Naive thymus-derived CD4-positive, alpha-beta T cell (primary cell): ENCODE measurements at regions of chr12 and their contacts with region 1.

Region 1: DNA sequence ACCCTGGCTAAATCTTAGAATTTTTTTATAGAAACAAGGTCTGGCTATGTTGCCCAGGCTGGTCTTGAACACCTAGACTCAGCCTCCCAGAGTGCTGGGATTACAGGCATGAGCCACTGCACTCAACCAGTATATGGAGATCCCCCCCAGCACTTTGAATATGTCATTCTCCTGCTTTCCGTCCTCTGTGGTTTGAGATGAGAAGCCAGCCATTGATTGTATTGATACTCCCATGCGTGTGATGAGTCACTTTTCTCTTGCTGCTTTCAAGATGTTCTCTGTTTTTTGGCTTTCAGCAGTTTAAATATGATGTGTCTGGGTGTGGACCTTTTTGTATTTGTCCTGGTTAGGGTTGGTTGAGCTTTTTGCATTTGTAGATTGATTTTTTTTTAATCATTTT is 75.2 kb upstream of the DNM1L start:
- DNase-seq: peak in 1 of 9 donors; percentile 57
- ATAC-seq: no peak
- H3K4me3 ChIP-seq: no peak overlapping the region
- H3K4me3 Mint-ChIP-seq: peak overlapping the region in 1 of 10 donors; percentile 57
- H3K27ac ChIP-seq: no peak overlapping the region
- H3K27ac Mint-ChIP-seq: peak overlapping the region in 1 of 9 donors; percentile 83
- H3K4me1 ChIP-seq: no peaks in the 10 kb centered on the region
- H3K4me1 Mint-ChIP-seq: peaks cover 0 to 27% (median 0%) of the 10 kb centered on the region in 7 donors
- H3K27me3 ChIP-seq: no peaks in the 10 kb centered on the region
- H3K27me3 Mint-ChIP-seq: no peaks in the 10 kb centered on the region

Region 2: GRCh38 chr12:32558903-32559302 is 45.0 kb before region 1 on chr12:
- CTCF ChIA-PET with region 1: no interaction called
- POLR2A ChIA-PET with region 1: no interaction called
- intact Hi-C with region 1: loop called in 1 of 2 experiments (anchors 5 kb)
- DNase-seq: no peak
- ATAC-seq: peak; percentile 52
- H3K4me3 ChIP-seq: no peak overlapping the region
- H3K4me3 Mint-ChIP-seq: no peak overlapping the region
- H3K27ac ChIP-seq: no peak overlapping the region
- H3K27ac Mint-ChIP-seq: no peak overlapping the region
- H3K4me1 ChIP-seq: no peaks in the 10 kb centered on the region
- H3K4me1 Mint-ChIP-seq: peaks cover 0 to 15% (median 0%) of the 10 kb centered on the region in 7 donors
- H3K27me3 ChIP-seq: no peaks in the 10 kb centered on the region
- H3K27me3 Mint-ChIP-seq: peaks cover 0 to 6% (median 0%) of the 10 kb centered on the region in 5 donors

Region 3: GRCh38 chr12:32586390-32586789 is 17.5 kb before region 1 on chr12:
- CTCF ChIA-PET with region 1: no interaction called
- POLR2A ChIA-PET with region 1: no interaction called
- intact Hi-C with region 1: loop called in 1 of 2 experiments (anchors 1 kb)
- DNase-seq: no peak
- ATAC-seq: no peak
- H3K4me3 ChIP-seq: no peak overlapping the region
- H3K4me3 Mint-ChIP-seq: peak overlapping the region in 2 of 10 donors; percentile 3 to 46
- H3K27ac ChIP-seq: no peak overlapping the region
- H3K27ac Mint-ChIP-seq: peak overlapping the region in 3 of 9 donors; percentile 1 to 63 (median 40)
- H3K4me1 ChIP-seq: peaks cover 0 to 9% of the 10 kb centered on the region in 2 donors
- H3K4me1 Mint-ChIP-seq: peaks cover 22 to 58% (median 33%) of the 10 kb centered on the region in 7 donors
- H3K27me3 ChIP-seq: no peaks in the 10 kb centered on the region
- H3K27me3 Mint-ChIP-seq: no peaks in the 10 kb centered on the region

Region 4: DNA sequence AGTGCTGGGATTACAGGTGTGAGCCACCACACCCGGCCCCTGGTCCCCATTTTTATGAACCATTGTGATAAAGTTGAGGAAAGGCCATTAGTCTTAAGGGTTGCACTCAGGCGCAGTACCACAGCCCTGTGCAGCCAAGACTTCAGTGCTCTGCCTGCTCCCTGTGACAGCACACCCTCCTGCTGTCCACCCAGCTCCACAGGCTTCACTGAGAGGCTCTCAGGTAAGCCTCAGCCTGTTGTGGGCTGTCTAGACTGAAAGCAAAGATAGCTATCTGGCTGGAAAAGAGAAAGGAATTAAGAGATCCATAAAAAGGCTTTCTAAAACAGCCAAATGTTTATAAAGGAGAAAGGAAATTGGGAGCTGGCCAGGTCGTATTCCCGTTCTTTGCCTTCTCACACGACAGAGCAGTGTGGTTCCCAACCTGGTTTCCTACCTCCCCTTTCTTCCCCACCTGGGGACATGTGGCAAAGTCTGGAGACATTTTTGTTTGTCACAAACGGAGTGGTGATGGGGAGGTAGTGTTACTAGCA is 56.1 kb after region 1 on chr12:
- CTCF ChIA-PET with region 1: no interaction called
- POLR2A ChIA-PET with region 1: no interaction called
- intact Hi-C with region 1: loop called in 1 of 2 experiments (anchors 1 kb)
- DNase-seq: no peak
- ATAC-seq: no peak
- H3K4me3 ChIP-seq: no peak overlapping the region
- H3K4me3 Mint-ChIP-seq: no peak overlapping the region
- H3K27ac ChIP-seq: no peak overlapping the region
- H3K27ac Mint-ChIP-seq: no peak overlapping the region
- H3K4me1 ChIP-seq: no peaks in the 10 kb centered on the region
- H3K4me1 Mint-ChIP-seq: peaks cover 0 to 8% (median 0%) of the 10 kb centered on the region in 7 donors
- H3K27me3 ChIP-seq: no peaks in the 10 kb centered on the region
- H3K27me3 Mint-ChIP-seq: no peaks in the 10 kb centered on the region

Region 5: GRCh38 chr12:34022079-34022830 is 1418.4 kb after region 1 on chr12 and contains the start of gene ALG10:
- CTCF ChIA-PET with region 1: no interaction called
- POLR2A ChIA-PET with region 1: no interaction called
- intact Hi-C with region 1: loop called in 1 of 2 experiments (anchors 10 kb)
- DNase-seq: peak; percentile 88 to 98 (median 96)
- ATAC-seq: peak; percentile 98
- H3K4me3 ChIP-seq: peak within 1 kb of the TSS; percentile 87
- H3K4me3 Mint-ChIP-seq: peak within 1 kb of the TSS; percentile 93 to 99 (median 96)
- H3K27ac ChIP-seq: peak within 1 kb of the TSS; percentile 94
- H3K27ac Mint-ChIP-seq: peak within 1 kb of the TSS; percentile 95 to 99 (median 98)
- H3K4me1 ChIP-seq: peaks cover 4 to 8% of the 10 kb centered on the region in 2 donors
- H3K4me1 Mint-ChIP-seq: peaks cover 6 to 42% (median 30%) of the 10 kb centered on the region in 7 donors
- H3K27me3 ChIP-seq: no peaks in the 10 kb centered on the region
- H3K27me3 Mint-ChIP-seq: no peaks in the 10 kb centered on the region
- total RNA-seq, gene ALG10: 10.2 to 21.6 (median 17.5) TPM